Stomach (tissue), 19 donors: ENCODE measurements at regions of chr9 and their contacts with region 1.

Region 1: DNA sequence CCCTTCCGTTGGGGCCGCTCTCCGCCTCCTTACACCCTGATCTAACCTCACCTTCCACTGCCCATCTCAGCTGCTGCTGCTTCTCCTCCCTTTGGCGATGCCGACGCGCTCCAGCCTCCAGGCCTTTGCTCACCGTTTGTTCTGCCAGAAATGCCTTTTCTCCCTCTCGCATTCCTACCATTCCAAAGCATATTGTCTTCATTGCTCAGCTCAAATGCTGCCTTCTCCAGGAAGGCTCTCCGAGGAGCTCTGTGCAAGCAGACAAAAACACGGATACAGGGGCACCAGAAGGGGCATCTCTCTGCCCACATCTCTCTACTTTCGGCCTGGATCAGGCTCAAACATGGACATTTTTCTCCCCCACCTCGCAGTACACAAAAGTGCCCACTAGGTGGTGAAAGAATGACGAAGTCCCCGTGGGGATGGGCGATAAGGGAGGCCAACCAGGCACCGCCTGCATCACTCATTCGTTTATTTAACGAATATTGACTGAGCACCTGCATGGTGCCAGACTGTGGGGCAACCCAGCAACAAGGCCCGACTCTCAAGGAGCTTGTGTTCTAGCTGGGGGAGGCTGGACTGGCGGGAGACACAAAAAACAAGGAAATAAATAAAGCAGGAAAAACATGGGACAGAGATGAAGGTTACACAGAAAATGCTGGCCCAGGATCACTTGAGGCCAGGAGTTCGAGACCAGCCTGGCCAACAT is 7.3 kb upstream of the GRHPR start:
- DNase-seq: peak; percentile 79 to 90
- H3K4me3 ChIP-seq: no peak overlapping the region
- H3K27ac ChIP-seq: peak overlapping the region in 2 of 5 donors; percentile 35 to 55
- H3K4me1 ChIP-seq: peaks cover 0 to 11% (median 6%) of the 10 kb centered on the region in 4 donors
- H3K27me3 ChIP-seq: no peaks in the 10 kb centered on the region
- CTCF ChIP-seq: peak in 5 of 7 experiments; percentile 79 to 92 (median 89)
- EP300 ChIP-seq: no peak
- POLR2A ChIP-seq: no peak

Region 2: GRCh38 chr9:37471942-37472679 is 56.9 kb after region 1 on chr9:
- intact Hi-C with region 1: loop called (anchors 10 kb)
- DNase-seq: peak in 1 of 2 donors; percentile 70
- H3K4me3 ChIP-seq: peak overlapping the region; percentile 23 to 34 (median 29)
- H3K27ac ChIP-seq: peak overlapping the region; percentile 62 to 85 (median 80)
- H3K4me1 ChIP-seq: peaks cover 6 to 17% (median 7%) of the 10 kb centered on the region in 4 donors
- H3K27me3 ChIP-seq: peaks cover 0 to 4% (median 0%) of the 10 kb centered on the region in 3 donors
- CTCF ChIP-seq: no peak
- EP300 ChIP-seq: no peak
- POLR2A ChIP-seq: no peak